OCI-LY7 (cell line): ENCODE measurements at regions of chr6 and their contacts with region 1.

Region 1: GRCh38 chr6:137744877-137745276 is 122.2 kb upstream of the TNFAIP3 start:
- DNase-seq: no peak
- H3K4me3 ChIP-seq: no peak overlapping the region
- H3K27ac ChIP-seq: no peak overlapping the region
- H3K4me1 ChIP-seq: peaks cover 5% of the 10 kb centered on the region
- CTCF ChIP-seq: no peak

Region 2: DNA sequence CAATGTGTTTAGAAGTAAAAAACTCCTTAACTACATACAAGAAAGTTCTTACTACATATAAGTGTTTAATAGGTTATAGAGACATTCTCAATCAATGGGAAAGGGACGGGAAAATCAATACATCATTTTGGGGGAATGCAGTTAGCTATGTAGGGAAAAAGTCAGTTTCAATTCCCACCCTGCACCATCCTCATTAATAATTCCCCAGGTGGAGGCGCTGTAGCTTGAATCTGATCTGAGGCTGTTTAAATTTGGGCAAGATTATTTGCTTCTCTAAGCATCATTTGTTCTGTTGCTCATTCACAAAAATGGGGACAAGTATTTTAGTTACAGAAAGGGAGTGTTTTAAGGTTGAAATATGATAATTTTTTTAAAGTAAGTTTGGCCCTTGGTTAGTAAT is 269.8 kb before region 1 on chr6:
- CTCF ChIA-PET with region 1: no interaction called
- POLR2A ChIA-PET with region 1: no interaction called
- intact Hi-C with region 1: no loop called
- DNase-seq: no peak
- H3K4me3 ChIP-seq: no peak overlapping the region
- H3K27ac ChIP-seq: no peak overlapping the region
- H3K4me1 ChIP-seq: no peaks in the 10 kb centered on the region
- CTCF ChIP-seq: peak; percentile 69

Region 3: DNA sequence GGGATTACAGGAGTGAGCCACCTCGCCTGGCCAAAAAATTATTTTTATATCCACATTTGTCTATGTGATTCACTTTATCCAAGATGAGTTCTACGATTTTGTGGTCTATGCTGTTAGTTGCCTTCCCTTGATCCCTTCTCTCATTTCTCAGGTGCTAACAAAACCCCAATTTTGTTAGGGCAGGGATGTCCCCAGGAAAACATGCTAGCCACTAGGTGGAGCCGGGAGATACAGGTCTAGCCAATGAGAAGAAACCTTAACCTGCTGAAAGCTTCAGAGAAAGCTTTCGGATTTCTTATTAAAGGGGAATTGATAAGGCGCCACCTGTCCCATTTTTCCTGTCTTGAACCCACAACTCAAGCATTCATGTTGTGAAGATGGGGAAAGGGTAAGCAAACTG is 83.3 kb before region 1 on chr6:
- CTCF ChIA-PET with region 1: no interaction called
- POLR2A ChIA-PET with region 1: no interaction called
- intact Hi-C with region 1: no loop called
- DNase-seq: peak; percentile 40
- H3K4me3 ChIP-seq: no peak overlapping the region
- H3K27ac ChIP-seq: no peak overlapping the region
- H3K4me1 ChIP-seq: peaks cover 4% of the 10 kb centered on the region
- CTCF ChIP-seq: peak; percentile 78

Region 4: GRCh38 chr6:137917551-137918325 is 172.9 kb after region 1 on chr6:
- CTCF ChIA-PET with region 1: no interaction called
- POLR2A ChIA-PET with region 1: interaction called, 11 read pairs
- intact Hi-C with region 1: no loop called
- DNase-seq: no peak
- H3K4me3 ChIP-seq: no peak overlapping the region
- H3K27ac ChIP-seq: no peak overlapping the region
- H3K4me1 ChIP-seq: peaks cover 4% of the 10 kb centered on the region
- CTCF ChIP-seq: no peak